ENCODE measurements at regions of chrX and their contacts with region 1.

Region 1: DNA sequence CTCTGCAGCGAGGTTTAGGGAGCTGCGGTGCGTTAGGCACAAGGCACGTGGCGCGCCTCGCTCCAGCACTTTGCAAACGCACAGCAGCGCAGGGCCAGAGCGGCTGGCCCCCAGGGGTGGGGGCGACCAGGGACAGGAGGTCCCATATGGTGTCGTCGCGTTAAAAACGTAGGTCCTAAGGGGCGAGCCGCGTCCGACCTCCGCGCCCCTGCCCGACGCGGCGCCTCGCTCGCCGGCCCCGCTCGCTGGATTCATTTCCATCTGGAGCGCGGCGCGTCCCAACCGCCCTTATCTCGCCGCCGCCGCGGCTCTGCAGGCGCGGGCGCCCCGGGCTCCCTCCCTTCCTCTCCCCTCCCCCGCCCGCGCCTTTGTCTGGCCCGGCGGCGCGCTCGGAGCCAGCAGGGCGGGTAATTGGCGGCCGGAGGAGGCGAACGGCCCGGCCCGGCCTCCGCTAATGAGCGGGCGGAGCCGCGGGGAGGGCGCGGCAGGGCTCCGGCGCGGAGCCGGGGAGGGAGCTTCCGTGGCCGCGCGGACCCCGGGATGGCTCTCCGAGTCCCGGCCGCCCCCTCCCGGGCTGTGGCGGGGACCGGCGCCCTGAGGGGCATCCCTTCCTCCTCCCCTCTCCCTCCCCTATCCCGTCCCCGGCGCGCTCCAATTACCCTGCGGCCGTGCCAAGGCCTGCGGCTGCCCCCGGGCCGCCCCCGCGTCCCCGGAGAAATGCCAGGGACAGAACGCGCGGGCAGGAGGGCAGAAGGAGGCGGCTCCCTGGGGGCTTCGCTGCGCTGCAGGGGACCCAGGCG is 409.0 kb downstream of the BCOR start:
- DNase-seq: peak in 1 of 2 experiments; percentile 63
- H3K4me3 ChIP-seq: peak overlapping the region; percentile 32 to 66 (median 33)
- H3K27ac ChIP-seq: no peak overlapping the region; the same call in 1 of the 2 replicates
- H3K4me1 ChIP-seq: peaks cover 3 to 11% (median 8%) of the 10 kb centered on the region in 4 experiments
- H3K27me3 ChIP-seq: peaks cover 0 to 3% (median 1%) of the 10 kb centered on the region in 4 experiments; a peak in 4 of 7 replicates
- CTCF ChIP-seq: no peak
- EP300 ChIP-seq: no peak
- POLR2A ChIP-seq: no peak
- RAD21 ChIP-seq: 0 out of 4 replicates have a peak, but pooled peaks of 1 of the 2 experiments have one; percentile 0

Region 2: GRCh38 chrX:39677978-39678791 is 10.6 kb before region 1 on chrX:
- CTCF ChIA-PET with region 1: no interaction called
- POLR2A ChIA-PET with region 1: interaction called, 10 read pairs
- DNase-seq: no peak
- H3K4me3 ChIP-seq: no peak overlapping the region
- H3K27ac ChIP-seq: no peak overlapping the region
- H3K4me1 ChIP-seq: peaks cover 0 to 6% (median 0%) of the 10 kb centered on the region in 4 experiments; a peak in 1 of 7 replicates
- H3K27me3 ChIP-seq: no peaks in the 10 kb centered on the region
- CTCF ChIP-seq: no peak
- EP300 ChIP-seq: no peak
- POLR2A ChIP-seq: no peak
- RAD21 ChIP-seq: no peak